GM12878 (cell line): ENCODE measurements at regions of chr10 and their contacts with region 1.

Region 1: GRCh38 chr10:73597346-73597745 is 6.2 kb upstream of the USP54 start:
- DNase-seq: no peak
- ATAC-seq: no peak
- H3K4me3 ChIP-seq: no peak overlapping the region
- H3K27ac ChIP-seq: no peak overlapping the region
- H3K4me1 ChIP-seq: no peaks in the 10 kb centered on the region
- H3K27me3 ChIP-seq: no peaks in the 10 kb centered on the region
- CTCF ChIP-seq: no peak
- EP300 ChIP-seq: no peak
- POLR2A ChIP-seq: no peak
- RAD21 ChIP-seq: no peak

Region 2: DNA sequence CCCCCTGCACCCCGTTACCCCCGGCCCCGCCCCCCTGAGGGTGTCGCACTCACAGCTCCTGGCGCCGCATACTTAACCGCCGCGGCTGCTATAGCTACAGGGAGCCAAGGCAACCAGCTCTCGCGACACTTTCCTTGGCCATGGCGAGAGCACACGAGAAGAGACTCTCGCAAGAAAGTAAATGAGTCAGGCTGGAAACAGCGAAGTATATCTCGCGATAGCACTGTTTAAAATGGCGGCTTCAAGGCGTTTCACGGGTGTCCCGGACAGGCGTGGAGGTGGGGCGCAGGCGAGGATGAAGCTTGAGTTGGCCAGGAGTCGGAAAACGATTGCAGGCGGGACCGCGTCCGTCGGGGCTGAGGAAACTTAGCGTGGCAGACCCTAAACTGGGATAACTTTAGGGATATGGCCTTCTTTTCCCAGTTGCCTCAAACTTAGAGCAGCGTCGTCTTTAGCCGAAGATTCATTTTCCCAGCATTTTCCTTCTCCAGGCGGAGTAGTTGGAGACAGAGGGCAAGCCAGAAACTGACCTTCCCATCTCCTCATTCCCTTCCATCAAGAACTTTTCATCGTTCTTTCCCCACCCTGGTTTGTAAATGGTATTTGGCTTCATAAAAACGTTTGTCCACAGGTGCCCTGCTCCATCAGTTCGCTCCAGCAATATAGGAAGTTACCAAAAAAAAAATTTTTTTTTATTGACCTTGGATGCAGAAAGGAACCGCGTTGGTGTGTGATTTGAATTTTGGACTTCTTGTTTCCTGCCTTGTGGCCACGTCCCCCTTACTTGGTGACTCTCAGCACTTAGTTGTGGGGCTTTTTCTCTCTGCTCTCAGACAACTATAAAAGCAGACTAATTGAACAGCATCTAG is 28.8 kb after region 1 on chr10:
- CTCF ChIA-PET with region 1: no interaction called
- POLR2A ChIA-PET with region 1: no interaction called
- RAD21 ChIA-PET with region 1: interaction called, 5 read pairs
- SMC1A ChIA-PET with region 1: no interaction called
- in situ Hi-C with region 1: no loop called
- intact Hi-C with region 1: loop called (anchors 2 kb)
- DNase-seq: peak; percentile 98
- ATAC-seq: peak; percentile 98
- H3K4me3 ChIP-seq: peak overlapping the region; percentile 87
- H3K27ac ChIP-seq: peak overlapping the region; percentile 95
- H3K4me1 ChIP-seq: peaks cover 5% of the 10 kb centered on the region
- H3K27me3 ChIP-seq: no peaks in the 10 kb centered on the region
- CTCF ChIP-seq: no peak
- EP300 ChIP-seq: 0 out of 4 replicates have a peak, but pooled peaks of 1 of the 2 experiments have one; percentile 10
- POLR2A ChIP-seq: peak; percentile 95
- RAD21 ChIP-seq: no peak

Region 3: GRCh38 chr10:73788864-73789658 is 191.7 kb after region 1 on chr10:
- CTCF ChIA-PET with region 1: no interaction called
- POLR2A ChIA-PET with region 1: no interaction called
- RAD21 ChIA-PET with region 1: no interaction called
- SMC1A ChIA-PET with region 1: no interaction called
- in situ Hi-C with region 1: no loop called
- intact Hi-C with region 1: no loop called
- DNase-seq: no peak
- ATAC-seq: no peak
- H3K4me3 ChIP-seq: no peak overlapping the region
- H3K27ac ChIP-seq: no peak overlapping the region
- H3K4me1 ChIP-seq: peaks cover 5% of the 10 kb centered on the region
- H3K27me3 ChIP-seq: no peaks in the 10 kb centered on the region
- CTCF ChIP-seq: no peak
- EP300 ChIP-seq: no peak
- POLR2A ChIP-seq: no peak
- RAD21 ChIP-seq: no peak